CD4-positive, alpha-beta T cell (primary cell): ENCODE measurements at regions of chr4 and their contacts with region 1.

Region 1: DNA sequence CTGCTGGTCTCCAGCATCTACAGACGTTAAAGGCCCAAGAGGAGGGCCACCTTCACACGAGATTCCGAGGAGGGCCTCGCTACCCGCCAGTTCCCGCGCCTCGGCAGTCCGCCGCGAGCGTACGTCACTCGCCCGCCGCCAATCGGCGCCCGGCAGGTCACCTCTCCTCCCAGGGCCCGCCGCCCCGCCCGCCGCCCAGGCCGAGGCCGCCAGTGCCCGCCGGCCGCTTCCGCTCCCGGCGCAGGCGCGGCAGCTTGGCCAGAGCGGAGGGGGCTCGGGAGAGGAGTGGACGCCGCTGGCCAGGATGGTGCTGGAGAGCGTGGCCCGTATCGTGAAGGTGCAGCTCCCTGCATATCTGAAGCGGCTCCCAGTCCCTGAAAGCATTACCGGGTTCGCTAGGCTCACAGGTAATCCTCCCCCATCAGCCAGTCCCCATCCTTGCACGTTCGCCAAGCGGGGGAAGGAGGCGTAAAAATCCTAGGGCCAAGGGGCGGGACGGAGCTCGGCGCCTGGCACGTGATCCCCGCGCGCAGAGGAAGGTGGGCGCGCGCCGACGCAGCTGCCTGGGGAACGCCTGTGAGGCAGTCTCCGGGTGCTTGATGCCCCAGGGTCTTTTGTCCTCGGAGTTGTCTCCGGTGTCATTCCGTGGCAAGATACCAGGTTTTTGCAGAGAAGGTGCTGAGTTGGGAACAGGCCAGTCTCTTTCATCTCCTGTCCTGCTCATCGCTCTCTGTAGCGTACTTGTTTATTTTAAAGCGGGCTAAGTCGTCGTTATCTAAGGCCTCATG is at the start of gene CISD2:
- DNase-seq: peak; percentile 79 to 96 (median 86)
- ATAC-seq: peak; percentile 81
- H3K4me3 ChIP-seq: peak within 1 kb of the TSS; percentile 70
- H3K4me3 Mint-ChIP-seq: peak within 1 kb of the TSS; percentile 87
- H3K27ac ChIP-seq: peak within 1 kb of the TSS; percentile 94 to 96
- H3K27ac Mint-ChIP-seq: peak within 1 kb of the TSS; percentile 98
- H3K4me1 ChIP-seq: peaks cover 21% of the 10 kb centered on the region
- H3K4me1 Mint-ChIP-seq: peaks cover 77% of the 10 kb centered on the region
- H3K27me3 ChIP-seq: no peaks in the 10 kb centered on the region
- H3K27me3 Mint-ChIP-seq: no peaks in the 10 kb centered on the region
- CTCF ChIP-seq: no peak
- total RNA-seq, gene CISD2: 12.8 to 13.7 TPM

Region 2: GRCh38 chr4:102500696-102501446 is 368.1 kb before region 1 on chr4 and contains the start of gene NFKB1:
- CTCF ChIA-PET with region 1: no interaction called
- POLR2A ChIA-PET with region 1: interaction called, 14 read pairs
- intact Hi-C with region 1: no loop called
- DNase-seq: peak; percentile 56 to 97 (median 68)
- ATAC-seq: peak; percentile 65
- H3K4me3 ChIP-seq: peak within 1 kb of the TSS; percentile 96
- H3K4me3 Mint-ChIP-seq: peak within 1 kb of the TSS; percentile 98
- H3K27ac ChIP-seq: peak within 1 kb of the TSS; percentile 99 to 100
- H3K27ac Mint-ChIP-seq: peak within 1 kb of the TSS; percentile 94
- H3K4me1 ChIP-seq: peaks cover 11% of the 10 kb centered on the region
- H3K4me1 Mint-ChIP-seq: peaks cover 42% of the 10 kb centered on the region
- H3K27me3 ChIP-seq: no peaks in the 10 kb centered on the region
- H3K27me3 Mint-ChIP-seq: no peaks in the 10 kb centered on the region
- CTCF ChIP-seq: no peak
- total RNA-seq, gene NFKB1: 134 TPM

Region 3: DNA sequence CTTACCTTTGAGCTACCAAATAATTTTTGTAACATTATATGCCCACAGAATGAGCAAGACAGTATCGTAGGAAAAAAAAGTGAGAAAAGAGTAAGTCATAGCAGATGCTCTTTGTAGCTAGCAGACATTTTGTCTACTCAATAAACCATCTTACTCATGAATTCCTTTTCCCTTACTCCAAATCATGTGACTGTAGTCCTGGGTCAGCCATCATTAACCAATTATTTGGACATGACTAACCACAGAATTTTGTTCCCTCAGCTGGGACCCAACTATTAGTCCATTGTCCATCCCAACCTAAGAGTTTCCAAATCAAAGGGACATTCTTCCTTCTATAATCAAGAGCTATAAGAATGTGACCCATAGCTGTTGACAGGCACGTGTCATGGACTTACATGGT is 53.0 kb before region 1 on chr4:
- CTCF ChIA-PET with region 1: no interaction called
- POLR2A ChIA-PET with region 1: interaction called, 55 read pairs
- intact Hi-C with region 1: no loop called
- DNase-seq: no peak
- ATAC-seq: no peak
- H3K4me3 ChIP-seq: no peak overlapping the region
- H3K4me3 Mint-ChIP-seq: peak overlapping the region; percentile 78
- H3K27ac ChIP-seq: peak overlapping the region in 1 of 2 donors; percentile 1
- H3K27ac Mint-ChIP-seq: peak overlapping the region; percentile 78
- H3K4me1 ChIP-seq: peaks cover 47% of the 10 kb centered on the region
- H3K4me1 Mint-ChIP-seq: peaks cover 92% of the 10 kb centered on the region
- H3K27me3 ChIP-seq: no peaks in the 10 kb centered on the region
- H3K27me3 Mint-ChIP-seq: no peaks in the 10 kb centered on the region
- CTCF ChIP-seq: no peak

Region 4: DNA sequence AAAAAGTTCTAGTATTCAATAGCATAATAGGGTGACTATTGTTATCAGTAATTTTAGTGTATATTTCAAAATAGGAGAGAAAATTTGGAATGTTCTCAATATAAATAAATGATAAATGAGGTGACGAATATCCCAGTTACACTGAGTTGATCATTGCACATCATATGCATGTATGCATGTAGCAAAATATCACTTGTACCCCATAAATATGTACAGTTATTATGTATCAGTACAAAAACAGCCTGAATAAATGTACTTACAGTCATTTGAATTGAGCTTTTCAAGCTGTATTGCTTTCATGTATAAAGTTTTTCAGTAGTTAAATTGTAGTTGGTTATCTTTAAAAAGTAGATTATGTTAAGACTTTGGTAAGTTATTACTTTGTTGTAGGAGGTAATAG is 12.4 kb after region 1 on chr4:
- CTCF ChIA-PET with region 1: interaction called, 3 read pairs
- POLR2A ChIA-PET with region 1: interaction called, 18 read pairs
- intact Hi-C with region 1: no loop called
- DNase-seq: no peak
- ATAC-seq: no peak
- H3K4me3 ChIP-seq: no peak overlapping the region
- H3K4me3 Mint-ChIP-seq: no peak overlapping the region
- H3K27ac ChIP-seq: no peak overlapping the region
- H3K27ac Mint-ChIP-seq: no peak overlapping the region
- H3K4me1 ChIP-seq: no peaks in the 10 kb centered on the region
- H3K4me1 Mint-ChIP-seq: peaks cover 8% of the 10 kb centered on the region
- H3K27me3 ChIP-seq: no peaks in the 10 kb centered on the region
- H3K27me3 Mint-ChIP-seq: no peaks in the 10 kb centered on the region
- CTCF ChIP-seq: no peak

Region 5: GRCh38 chr4:103075901-103076739 is 207.1 kb after region 1 on chr4:
- CTCF ChIA-PET with region 1: no interaction called
- POLR2A ChIA-PET with region 1: interaction called, 11 read pairs
- intact Hi-C with region 1: no loop called
- DNase-seq: peak; percentile 43 to 80 (median 58)
- ATAC-seq: peak; percentile 81
- H3K4me3 ChIP-seq: peak overlapping the region; percentile 81
- H3K4me3 Mint-ChIP-seq: peak overlapping the region; percentile 88
- H3K27ac ChIP-seq: peak overlapping the region; percentile 78 to 88
- H3K27ac Mint-ChIP-seq: peak overlapping the region; percentile 94
- H3K4me1 ChIP-seq: peaks cover 17% of the 10 kb centered on the region
- H3K4me1 Mint-ChIP-seq: peaks cover 59% of the 10 kb centered on the region
- H3K27me3 ChIP-seq: no peaks in the 10 kb centered on the region
- H3K27me3 Mint-ChIP-seq: no peaks in the 10 kb centered on the region
- CTCF ChIP-seq: no peak